Naive thymus-derived CD4-positive, alpha-beta T cell (primary cell): ENCODE measurements at regions of chr3 and their contacts with region 1.

Region 1: GRCh38 chr3:196609343-196609775 is 30.1 kb upstream of the NRROS start:
- DNase-seq: peak; percentile 78 to 93 (median 88)
- ATAC-seq: peak; percentile 96
- H3K4me3 ChIP-seq: no peak overlapping the region
- H3K4me3 Mint-ChIP-seq: peak overlapping the region; percentile 49 to 80 (median 74)
- H3K27ac ChIP-seq: peak overlapping the region; percentile 39
- H3K27ac Mint-ChIP-seq: peak overlapping the region; percentile 72 to 93 (median 88)
- H3K4me1 ChIP-seq: peaks cover 23 to 26% of the 10 kb centered on the region in 2 donors
- H3K4me1 Mint-ChIP-seq: peaks cover 28 to 50% (median 47%) of the 10 kb centered on the region in 7 donors
- H3K27me3 ChIP-seq: no peaks in the 10 kb centered on the region
- H3K27me3 Mint-ChIP-seq: peaks cover 0 to 5% (median 0%) of the 10 kb centered on the region in 5 donors

Region 2: DNA sequence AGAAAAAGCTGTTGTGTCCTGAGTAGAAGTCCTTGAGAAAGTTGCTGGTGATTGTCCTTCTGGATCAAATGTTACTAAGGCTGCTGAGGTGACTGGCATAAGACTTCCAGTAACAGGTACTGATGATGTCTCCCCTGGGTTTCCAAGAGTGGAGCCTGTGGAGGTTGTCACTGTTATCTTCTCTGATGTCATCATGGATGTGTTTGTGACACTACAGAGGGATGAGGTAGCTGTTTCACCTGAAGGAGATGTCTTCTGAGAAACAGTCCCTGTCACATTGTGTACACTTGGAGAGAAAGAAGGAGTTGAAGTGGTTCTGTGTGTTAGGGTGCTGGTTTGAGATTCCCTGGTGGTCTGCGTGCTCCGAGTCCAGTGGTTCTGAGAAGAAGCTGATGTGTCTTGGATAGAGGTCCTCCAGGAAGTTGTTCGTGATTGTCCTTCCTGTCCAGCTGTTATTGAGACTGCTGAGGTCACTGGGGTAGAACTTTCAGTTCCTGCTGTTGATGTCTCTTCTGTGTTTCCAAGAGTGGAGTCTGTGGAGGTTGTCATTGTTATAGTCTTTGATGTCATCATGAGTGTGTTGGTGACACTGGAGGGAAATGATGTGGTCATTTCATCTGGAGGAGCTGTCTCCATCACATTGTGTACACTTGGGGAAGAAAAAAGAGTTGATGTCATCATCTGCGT is 818.6 kb before region 1 on chr3:
- CTCF ChIA-PET with region 1: no interaction called
- POLR2A ChIA-PET with region 1: no interaction called
- intact Hi-C with region 1: no loop called
- DNase-seq: no peak
- ATAC-seq: peak; percentile 58
- H3K4me3 ChIP-seq: no peak overlapping the region
- H3K4me3 Mint-ChIP-seq: peak overlapping the region in 3 of 10 donors; percentile 1 to 42 (median 39)
- H3K27ac ChIP-seq: no peak overlapping the region
- H3K27ac Mint-ChIP-seq: peak overlapping the region in 8 of 9 donors; percentile 43 to 88 (median 76)
- H3K4me1 ChIP-seq: peaks cover 13 to 16% of the 10 kb centered on the region in 2 donors
- H3K4me1 Mint-ChIP-seq: peaks cover 38 to 47% (median 45%) of the 10 kb centered on the region in 7 donors
- H3K27me3 ChIP-seq: no peaks in the 10 kb centered on the region
- H3K27me3 Mint-ChIP-seq: peaks cover 0 to 23% (median 0%) of the 10 kb centered on the region in 5 donors

Region 3: DNA sequence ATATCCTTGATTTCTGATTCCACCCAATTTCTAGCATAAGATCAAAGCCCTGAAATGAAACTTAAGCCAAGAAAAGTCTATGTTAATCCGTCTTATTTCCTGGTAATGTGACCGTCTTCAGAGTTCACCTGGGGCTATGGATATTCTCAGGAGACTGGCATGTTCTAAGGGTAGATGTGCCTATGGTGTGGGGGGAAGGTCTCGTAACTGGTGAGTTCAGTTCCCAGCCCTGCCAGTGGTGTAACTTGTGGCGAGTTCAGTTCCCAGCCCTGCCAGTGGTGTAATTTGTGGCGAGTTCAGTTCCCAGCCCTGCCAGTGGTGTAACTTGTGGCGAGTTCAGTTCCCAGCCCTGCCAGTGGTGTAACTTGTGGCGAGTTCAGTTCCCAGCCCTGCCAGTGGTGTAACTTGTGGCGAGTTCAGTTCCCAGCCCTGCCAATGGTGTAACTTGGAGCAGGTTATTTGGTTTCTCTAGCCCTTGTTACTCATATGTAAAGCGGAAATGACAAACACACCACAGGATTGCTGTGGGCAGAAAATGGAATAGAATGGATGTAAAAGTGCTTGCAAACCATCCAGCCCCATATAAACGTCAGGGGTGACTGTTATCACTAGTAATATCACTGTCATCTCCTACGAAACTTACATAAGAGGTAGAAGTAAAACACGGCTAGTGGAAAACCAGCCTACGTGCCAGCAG is 362.6 kb before region 1 on chr3:
- CTCF ChIA-PET with region 1: no interaction called
- POLR2A ChIA-PET with region 1: no interaction called
- intact Hi-C with region 1: no loop called
- DNase-seq: no peak
- ATAC-seq: peak; percentile 58
- H3K4me3 ChIP-seq: no peak overlapping the region
- H3K4me3 Mint-ChIP-seq: no peak overlapping the region
- H3K27ac ChIP-seq: no peak overlapping the region
- H3K27ac Mint-ChIP-seq: no peak overlapping the region
- H3K4me1 ChIP-seq: no peaks in the 10 kb centered on the region
- H3K4me1 Mint-ChIP-seq: peaks cover 0 to 7% (median 0%) of the 10 kb centered on the region in 7 donors
- H3K27me3 ChIP-seq: no peaks in the 10 kb centered on the region
- H3K27me3 Mint-ChIP-seq: no peaks in the 10 kb centered on the region

Region 4: DNA sequence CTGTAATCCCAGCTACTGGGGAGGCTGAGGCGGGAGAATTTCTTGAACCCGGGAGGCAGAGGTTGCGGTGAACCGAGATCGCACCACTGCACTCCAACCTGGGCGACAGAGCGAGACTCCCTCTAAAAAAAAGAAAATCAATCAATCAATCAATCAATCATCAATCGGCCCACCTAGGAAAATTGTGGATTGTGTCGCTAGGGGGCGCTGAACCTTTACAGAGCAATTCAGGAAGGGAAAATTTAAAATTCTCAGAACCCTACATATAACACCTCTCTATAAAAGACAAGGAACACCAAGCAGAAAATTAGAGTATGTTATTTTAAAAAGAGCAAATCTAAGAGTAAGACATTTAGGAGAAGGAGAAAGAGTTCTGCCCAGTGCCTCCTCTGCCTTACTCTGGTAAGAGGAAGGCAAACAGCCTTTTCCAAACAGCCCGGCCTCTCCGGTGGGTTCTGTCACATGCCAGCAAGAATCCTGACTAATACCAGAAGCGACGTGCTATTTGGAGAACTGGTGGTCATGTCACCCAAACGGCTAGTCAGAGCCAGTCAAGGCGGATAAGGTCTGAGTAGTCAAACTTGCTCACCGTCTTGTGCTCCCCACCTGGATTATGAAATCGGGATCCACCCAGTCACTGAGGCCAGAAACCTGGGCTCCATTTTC is 71.9 kb before region 1 on chr3:
- CTCF ChIA-PET with region 1: no interaction called
- POLR2A ChIA-PET with region 1: no interaction called
- intact Hi-C with region 1: loop called (anchors 1 to 10 kb)
- DNase-seq: peak; percentile 19 to 60 (median 43)
- ATAC-seq: peak; percentile 46
- H3K4me3 ChIP-seq: no peak overlapping the region
- H3K4me3 Mint-ChIP-seq: no peak overlapping the region
- H3K27ac ChIP-seq: no peak overlapping the region
- H3K27ac Mint-ChIP-seq: no peak overlapping the region
- H3K4me1 ChIP-seq: no peaks in the 10 kb centered on the region
- H3K4me1 Mint-ChIP-seq: peaks cover 0 to 8% (median 0%) of the 10 kb centered on the region in 7 donors
- H3K27me3 ChIP-seq: no peaks in the 10 kb centered on the region
- H3K27me3 Mint-ChIP-seq: peaks cover 0 to 14% (median 0%) of the 10 kb centered on the region in 5 donors

Region 5: GRCh38 chr3:196559826-196560225 is 49.5 kb before region 1 on chr3:
- CTCF ChIA-PET with region 1: no interaction called
- POLR2A ChIA-PET with region 1: no interaction called
- intact Hi-C with region 1: no loop called
- DNase-seq: peak in 2 of 9 donors; percentile 3 to 5
- ATAC-seq: no peak
- H3K4me3 ChIP-seq: no peak overlapping the region
- H3K4me3 Mint-ChIP-seq: no peak overlapping the region
- H3K27ac ChIP-seq: no peak overlapping the region
- H3K27ac Mint-ChIP-seq: peak overlapping the region in 4 of 9 donors; percentile 32 to 78 (median 60)
- H3K4me1 ChIP-seq: peaks cover 0 to 10% of the 10 kb centered on the region in 2 donors
- H3K4me1 Mint-ChIP-seq: peaks cover 19 to 52% (median 34%) of the 10 kb centered on the region in 7 donors
- H3K27me3 ChIP-seq: no peaks in the 10 kb centered on the region
- H3K27me3 Mint-ChIP-seq: no peaks in the 10 kb centered on the region

Region 6: GRCh38 chr3:196639483-196640296 is 30.3 kb after region 1 on chr3 and contains the start of gene NRROS:
- CTCF ChIA-PET with region 1: interaction called, 51 read pairs
- POLR2A ChIA-PET with region 1: interaction called, 15 read pairs
- intact Hi-C with region 1: no loop called
- DNase-seq: peak; percentile 25 to 71 (median 46)
- ATAC-seq: peak; percentile 70
- H3K4me3 ChIP-seq: peak within 1 kb of the TSS; percentile 75
- H3K4me3 Mint-ChIP-seq: peak within 1 kb of the TSS; percentile 75 to 94 (median 92)
- H3K27ac ChIP-seq: peak within 1 kb of the TSS; percentile 79
- H3K27ac Mint-ChIP-seq: peak within 1 kb of the TSS; percentile 74 to 95 (median 92)
- H3K4me1 ChIP-seq: peaks cover 27 to 36% of the 10 kb centered on the region in 2 donors
- H3K4me1 Mint-ChIP-seq: peaks cover 49 to 92% (median 71%) of the 10 kb centered on the region in 7 donors
- H3K27me3 ChIP-seq: no peaks in the 10 kb centered on the region
- H3K27me3 Mint-ChIP-seq: no peaks in the 10 kb centered on the region
- total RNA-seq, gene NRROS: 9.8 to 53.3 (median 14.2) TPM

Region 7: GRCh38 chr3:196684548-196685407 is 75.4 kb after region 1 on chr3:
- CTCF ChIA-PET with region 1: interaction called, 166 read pairs
- POLR2A ChIA-PET with region 1: interaction called, 17 read pairs
- intact Hi-C with region 1: loop called (anchors 1 kb)
- DNase-seq: peak; percentile 29 to 78 (median 62)
- ATAC-seq: peak; percentile 78
- H3K4me3 ChIP-seq: peak overlapping the region; percentile 28
- H3K4me3 Mint-ChIP-seq: peak overlapping the region; percentile 51 to 69 (median 67)
- H3K27ac ChIP-seq: peak overlapping the region; percentile 34
- H3K27ac Mint-ChIP-seq: peak overlapping the region; percentile 38 to 80 (median 71)
- H3K4me1 ChIP-seq: peaks cover 0 to 5% of the 10 kb centered on the region in 2 donors
- H3K4me1 Mint-ChIP-seq: peaks cover 14 to 23% (median 17%) of the 10 kb centered on the region in 7 donors
- H3K27me3 ChIP-seq: no peaks in the 10 kb centered on the region
- H3K27me3 Mint-ChIP-seq: peaks cover 0 to 3% (median 0%) of the 10 kb centered on the region in 5 donors

Region 8: DNA sequence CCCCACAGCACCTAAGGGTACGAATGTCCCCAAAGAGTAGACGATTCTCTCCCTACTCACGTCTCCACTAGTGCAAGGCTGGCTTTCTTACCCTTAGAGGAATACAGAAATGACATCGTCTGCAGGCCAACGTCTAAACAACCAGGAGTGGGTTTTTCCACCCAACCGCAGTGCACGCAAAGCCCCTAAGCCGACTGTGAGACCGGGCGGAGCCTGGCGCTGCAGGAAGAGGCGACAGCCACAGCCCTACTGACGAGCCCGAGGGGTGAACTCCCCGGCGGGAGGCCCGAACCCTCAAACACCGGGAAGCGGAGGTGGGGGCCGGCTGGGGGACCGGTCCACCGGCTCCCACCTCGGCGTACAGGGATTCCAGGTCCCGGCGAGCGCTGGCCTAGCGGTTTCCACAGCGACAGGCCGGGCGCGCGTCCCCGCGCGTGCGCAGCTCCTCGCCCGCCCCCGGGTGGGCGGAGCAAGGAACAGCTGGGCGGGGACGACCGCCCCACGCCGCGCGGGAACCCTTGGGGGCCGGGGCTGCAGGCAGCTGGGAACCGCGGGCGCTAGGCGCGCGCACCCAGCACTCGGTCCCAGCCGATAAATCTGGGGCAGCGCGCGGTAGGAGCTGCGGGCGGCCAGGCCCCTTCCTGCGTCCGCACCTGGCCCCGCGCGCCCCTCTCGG is 102.6 kb after region 1 on chr3 and contains the starts of genes CEP19 and PIGX:
- CTCF ChIA-PET with region 1: interaction called, 4 read pairs
- POLR2A ChIA-PET with region 1: interaction called, 3 read pairs
- intact Hi-C with region 1: loop called (anchors 1 kb)
- DNase-seq: peak; percentile 92 to 97 (median 94)
- ATAC-seq: peak; percentile 92
- H3K4me3 ChIP-seq: peak within 1 kb of the TSS; percentile 79
- H3K4me3 Mint-ChIP-seq: peak within 1 kb of the TSS; percentile 84 to 98 (median 94)
- H3K27ac ChIP-seq: peak within 1 kb of the TSS; percentile 96
- H3K27ac Mint-ChIP-seq: peak within 1 kb of the TSS; percentile 91 to 99 (median 96)
- H3K4me1 ChIP-seq: peaks cover 12 to 14% of the 10 kb centered on the region in 2 donors
- H3K4me1 Mint-ChIP-seq: peaks cover 16 to 42% (median 34%) of the 10 kb centered on the region in 7 donors
- H3K27me3 ChIP-seq: no peaks in the 10 kb centered on the region
- H3K27me3 Mint-ChIP-seq: no peaks in the 10 kb centered on the region
- total RNA-seq, gene CEP19: 0.96 to 8.1 (median 6.9) TPM
- total RNA-seq, gene PIGX: 13.7 to 58.5 (median 17.3) TPM

Region 9: GRCh38 chr3:196942226-196942914 is 333.0 kb after region 1 on chr3 and contains the start of gene NCBP2:
- CTCF ChIA-PET with region 1: no interaction called
- POLR2A ChIA-PET with region 1: interaction called, 4 read pairs
- intact Hi-C with region 1: loop called in 1 of 2 experiments (anchors 1 kb)
- DNase-seq: peak; percentile 98 to 100 (median 99)
- ATAC-seq: peak; percentile 97
- H3K4me3 ChIP-seq: peak within 1 kb of the TSS; percentile 100
- H3K4me3 Mint-ChIP-seq: peak within 1 kb of the TSS; percentile 94 to 99 (median 98)
- H3K27ac ChIP-seq: peak within 1 kb of the TSS; percentile 94
- H3K27ac Mint-ChIP-seq: peak within 1 kb of the TSS; percentile 96 to 100 (median 98)
- H3K4me1 ChIP-seq: peaks cover 16 to 20% of the 10 kb centered on the region in 2 donors
- H3K4me1 Mint-ChIP-seq: peaks cover 30 to 64% (median 49%) of the 10 kb centered on the region in 7 donors
- H3K27me3 ChIP-seq: no peaks in the 10 kb centered on the region
- H3K27me3 Mint-ChIP-seq: peaks cover 0 to 5% (median 0%) of the 10 kb centered on the region in 5 donors
- total RNA-seq, gene NCBP2: 42.9 to 77.3 (median 67.5) TPM